ENCODE measurements at regions of chr19 and their contacts with region 1.

Region 1: DNA sequence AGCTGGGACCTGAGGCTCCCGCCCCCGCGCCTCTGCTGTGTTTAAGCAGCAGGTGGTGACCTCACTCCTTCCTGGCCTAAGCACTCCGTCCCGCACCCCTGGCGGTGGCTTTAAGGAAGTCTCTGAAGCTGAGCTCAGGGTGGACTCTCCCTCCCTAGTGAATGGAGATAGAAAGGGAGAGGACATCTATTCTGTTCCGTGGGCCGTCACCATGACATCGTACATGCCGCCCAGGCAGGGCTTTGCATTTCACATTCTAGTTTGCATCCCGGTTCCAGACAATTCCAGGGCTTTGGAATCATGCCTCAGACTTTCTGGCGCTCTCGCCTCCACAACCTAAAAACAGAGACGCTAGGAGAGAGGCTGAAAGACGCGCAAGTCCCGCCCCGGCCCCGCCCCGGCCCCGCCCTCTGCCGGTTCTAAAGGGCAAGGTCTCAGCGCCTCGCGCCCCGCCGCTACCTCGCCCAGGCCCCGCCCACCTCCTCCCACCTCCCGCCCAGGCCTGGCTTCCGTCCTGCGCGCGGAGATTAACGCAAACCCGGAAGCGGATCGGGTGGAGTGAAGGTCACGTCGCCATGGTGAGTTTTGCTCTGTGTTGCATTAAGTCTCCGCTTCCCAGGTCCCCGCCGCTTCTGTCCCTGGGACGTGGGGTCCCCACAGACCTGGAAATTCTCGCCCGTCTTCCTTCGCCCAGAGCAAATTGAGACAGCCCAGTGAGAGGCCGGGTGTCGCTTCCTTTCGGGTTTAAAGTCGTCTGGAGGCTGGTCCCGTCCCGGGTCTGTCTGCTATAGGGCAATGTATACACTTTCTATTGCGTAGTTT is at the start of gene ZNF808:
- DNase-seq: peak; percentile 94
- ATAC-seq: peak; percentile 92
- H3K4me3 ChIP-seq: peak within 1 kb of the TSS; percentile 60 to 97 (median 89)
- H3K4me3 Mint-ChIP-seq: peak within 1 kb of the TSS; percentile 96
- H3K27ac ChIP-seq: peak within 1 kb of the TSS; percentile 88 to 94
- H3K27ac Mint-ChIP-seq: peak within 1 kb of the TSS; percentile 96
- H3K4me1 ChIP-seq: peaks cover 9 to 19% of the 10 kb centered on the region in 2 donors
- H3K4me1 Mint-ChIP-seq: peaks cover 26% of the 10 kb centered on the region
- H3K27me3 ChIP-seq: no peaks in the 10 kb centered on the region
- H3K27me3 Mint-ChIP-seq: no peaks in the 10 kb centered on the region
- CTCF ChIP-seq: peak; percentile 64
- total RNA-seq, gene ZNF808: 54.8 and 56.0 TPM in 2 replicates

Region 2: DNA sequence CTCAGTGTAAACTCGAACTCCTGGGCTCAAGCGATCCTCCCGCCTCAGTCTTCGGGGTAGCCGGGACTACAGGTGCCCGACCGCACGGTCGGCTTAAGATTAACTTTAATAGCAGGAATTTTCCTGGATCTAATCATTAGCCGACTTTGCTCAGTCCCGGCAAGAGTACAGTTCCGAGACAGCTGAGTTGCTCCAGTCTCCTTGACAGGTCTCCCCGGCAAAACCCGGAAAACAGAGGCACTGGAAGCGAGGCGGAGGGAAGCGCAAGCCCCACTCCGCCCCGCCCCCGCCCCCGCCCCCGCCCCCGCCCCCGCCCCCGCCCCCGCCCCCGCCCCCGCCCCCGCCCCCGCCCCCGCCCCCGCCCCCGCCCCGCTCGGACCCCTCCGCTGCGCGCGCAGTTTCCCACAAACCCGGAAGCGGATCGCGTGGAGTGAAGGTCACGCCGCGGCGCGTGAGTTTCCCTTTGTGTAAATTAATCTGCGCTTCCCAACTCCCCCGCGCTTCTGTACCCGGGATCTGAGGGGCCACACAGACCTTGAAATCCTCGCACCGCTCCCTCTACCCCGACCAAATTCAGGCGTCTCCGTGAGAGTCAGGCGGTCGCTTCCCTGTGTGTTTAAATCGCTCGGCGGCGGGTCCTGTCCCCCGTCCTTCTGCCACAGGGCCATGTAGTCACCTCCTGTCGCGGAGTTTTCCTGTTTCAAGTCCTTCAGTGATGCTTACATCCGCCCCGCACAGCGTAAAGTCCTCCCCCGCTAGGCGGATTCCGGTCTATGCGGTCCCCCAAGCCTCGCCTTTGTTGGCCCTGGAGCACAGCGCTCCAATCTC is 230.4 kb before region 1 on chr19 and contains the start of gene ZNF480:
- CTCF ChIA-PET with region 1: no interaction called
- POLR2A ChIA-PET with region 1: no interaction called
- intact Hi-C with region 1: loop called (anchors 2 kb)
- DNase-seq: peak; percentile 91
- ATAC-seq: peak; percentile 77
- H3K4me3 ChIP-seq: peak within 1 kb of the TSS; percentile 93 to 98 (median 98)
- H3K4me3 Mint-ChIP-seq: peak within 1 kb of the TSS; percentile 96
- H3K27ac ChIP-seq: peak within 1 kb of the TSS; percentile 94 to 96
- H3K27ac Mint-ChIP-seq: peak within 1 kb of the TSS; percentile 98
- H3K4me1 ChIP-seq: peaks cover 11 to 16% of the 10 kb centered on the region in 2 donors
- H3K4me1 Mint-ChIP-seq: peaks cover 21% of the 10 kb centered on the region
- H3K27me3 ChIP-seq: no peaks in the 10 kb centered on the region
- H3K27me3 Mint-ChIP-seq: no peaks in the 10 kb centered on the region
- CTCF ChIP-seq: no peak
- total RNA-seq, gene ZNF480: 21.8 and 24.8 TPM in 2 replicates

Region 3: GRCh38 chr19:52397310-52398080 is 129.8 kb before region 1 on chr19 and contains the start of gene ZNF528:
- CTCF ChIA-PET with region 1: no interaction called
- POLR2A ChIA-PET with region 1: no interaction called
- intact Hi-C with region 1: loop called (anchors 1 kb)
- DNase-seq: peak; percentile 92
- ATAC-seq: peak; percentile 98
- H3K4me3 ChIP-seq: peak within 1 kb of the TSS; percentile 61 to 89 (median 72)
- H3K4me3 Mint-ChIP-seq: peak within 1 kb of the TSS; percentile 90
- H3K27ac ChIP-seq: peak within 1 kb of the TSS; percentile 60 to 77
- H3K27ac Mint-ChIP-seq: peak within 1 kb of the TSS; percentile 94
- H3K4me1 ChIP-seq: peaks cover 15 to 17% of the 10 kb centered on the region in 2 donors
- H3K4me1 Mint-ChIP-seq: peaks cover 20% of the 10 kb centered on the region
- H3K27me3 ChIP-seq: no peaks in the 10 kb centered on the region
- H3K27me3 Mint-ChIP-seq: no peaks in the 10 kb centered on the region
- CTCF ChIP-seq: no peak
- total RNA-seq, gene ZNF528: 69.2 and 71.8 TPM in 2 replicates

Region 4: GRCh38 chr19:52570000-52570861 is 42.9 kb after region 1 on chr19 and contains the start of gene ZNF701:
- CTCF ChIA-PET with region 1: interaction called, 3 read pairs
- POLR2A ChIA-PET with region 1: no interaction called
- intact Hi-C with region 1: loop called (anchors 1 kb)
- DNase-seq: peak; percentile 96
- ATAC-seq: peak; percentile 99
- H3K4me3 ChIP-seq: peak within 1 kb of the TSS; percentile 84 to 98 (median 98)
- H3K4me3 Mint-ChIP-seq: peak within 1 kb of the TSS; percentile 87
- H3K27ac ChIP-seq: peak within 1 kb of the TSS; percentile 77 to 87
- H3K27ac Mint-ChIP-seq: peak within 1 kb of the TSS; percentile 82
- H3K4me1 ChIP-seq: peaks cover 11 to 14% of the 10 kb centered on the region in 2 donors
- H3K4me1 Mint-ChIP-seq: peaks cover 33% of the 10 kb centered on the region
- H3K27me3 ChIP-seq: no peaks in the 10 kb centered on the region
- H3K27me3 Mint-ChIP-seq: no peaks in the 10 kb centered on the region
- CTCF ChIP-seq: peak; percentile 45
- total RNA-seq, gene ZNF701: 48.8 and 49.2 TPM in 2 replicates

Region 5: DNA sequence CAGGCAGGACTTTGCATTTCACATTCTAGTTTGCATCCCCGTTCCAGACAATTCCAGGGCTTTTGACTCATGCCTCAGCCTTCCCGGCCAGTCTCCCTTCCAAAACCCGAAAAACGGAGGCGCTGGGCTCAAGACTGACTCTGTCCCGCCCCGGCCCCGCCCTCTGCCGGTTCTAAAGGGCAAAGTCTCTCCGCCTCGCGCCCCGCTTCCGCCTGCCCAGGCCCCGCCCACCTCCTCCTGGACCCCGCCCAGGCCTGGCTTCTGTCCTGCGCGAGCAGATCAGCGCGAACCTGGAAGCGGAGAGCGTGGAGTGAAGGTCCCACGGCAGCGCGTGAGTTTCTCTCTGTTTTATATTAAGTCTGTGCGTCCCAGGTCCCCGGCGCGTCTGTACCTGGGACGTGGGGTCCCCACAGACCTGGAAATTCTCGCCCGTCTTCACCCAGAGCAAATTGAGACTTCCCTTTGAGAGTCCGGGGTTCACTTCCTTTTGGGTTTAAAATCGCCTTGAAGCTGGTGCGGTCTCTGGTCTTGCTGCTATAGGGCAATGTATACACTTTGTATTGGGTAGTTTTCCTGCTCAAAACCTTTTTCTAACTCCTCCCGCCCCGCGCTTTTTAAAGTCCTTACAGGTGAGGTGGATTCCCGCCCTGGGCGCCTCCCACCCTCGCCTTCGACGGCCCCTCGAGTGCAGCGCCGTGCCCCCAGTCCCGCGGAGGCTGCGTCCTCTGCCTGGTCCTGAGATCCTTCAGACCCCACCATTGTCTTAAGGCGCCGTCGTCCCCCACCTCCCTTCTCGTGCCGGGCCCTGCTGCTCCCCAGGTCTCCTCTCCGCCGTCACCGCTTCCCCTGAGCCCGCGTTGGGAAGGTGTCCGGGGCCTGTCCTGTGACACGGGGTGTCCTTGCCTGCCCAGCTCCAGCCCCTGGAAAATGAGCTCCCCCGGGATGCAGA is 74.0 kb after region 1 on chr19:
- CTCF ChIA-PET with region 1: interaction called, 3 read pairs
- POLR2A ChIA-PET with region 1: interaction called, 4 read pairs
- intact Hi-C with region 1: loop called (anchors 2 kb)
- DNase-seq: peak; percentile 92
- ATAC-seq: peak; percentile 99
- H3K4me3 ChIP-seq: peak overlapping the region; percentile 59 to 89 (median 82)
- H3K4me3 Mint-ChIP-seq: peak overlapping the region; percentile 90
- H3K27ac ChIP-seq: peak overlapping the region; percentile 43 to 62
- H3K27ac Mint-ChIP-seq: peak overlapping the region; percentile 87
- H3K4me1 ChIP-seq: peaks cover 11 to 16% of the 10 kb centered on the region in 2 donors
- H3K4me1 Mint-ChIP-seq: peaks cover 25% of the 10 kb centered on the region
- H3K27me3 ChIP-seq: no peaks in the 10 kb centered on the region
- H3K27me3 Mint-ChIP-seq: no peaks in the 10 kb centered on the region
- CTCF ChIP-seq: peak; percentile 61

Region 6: DNA sequence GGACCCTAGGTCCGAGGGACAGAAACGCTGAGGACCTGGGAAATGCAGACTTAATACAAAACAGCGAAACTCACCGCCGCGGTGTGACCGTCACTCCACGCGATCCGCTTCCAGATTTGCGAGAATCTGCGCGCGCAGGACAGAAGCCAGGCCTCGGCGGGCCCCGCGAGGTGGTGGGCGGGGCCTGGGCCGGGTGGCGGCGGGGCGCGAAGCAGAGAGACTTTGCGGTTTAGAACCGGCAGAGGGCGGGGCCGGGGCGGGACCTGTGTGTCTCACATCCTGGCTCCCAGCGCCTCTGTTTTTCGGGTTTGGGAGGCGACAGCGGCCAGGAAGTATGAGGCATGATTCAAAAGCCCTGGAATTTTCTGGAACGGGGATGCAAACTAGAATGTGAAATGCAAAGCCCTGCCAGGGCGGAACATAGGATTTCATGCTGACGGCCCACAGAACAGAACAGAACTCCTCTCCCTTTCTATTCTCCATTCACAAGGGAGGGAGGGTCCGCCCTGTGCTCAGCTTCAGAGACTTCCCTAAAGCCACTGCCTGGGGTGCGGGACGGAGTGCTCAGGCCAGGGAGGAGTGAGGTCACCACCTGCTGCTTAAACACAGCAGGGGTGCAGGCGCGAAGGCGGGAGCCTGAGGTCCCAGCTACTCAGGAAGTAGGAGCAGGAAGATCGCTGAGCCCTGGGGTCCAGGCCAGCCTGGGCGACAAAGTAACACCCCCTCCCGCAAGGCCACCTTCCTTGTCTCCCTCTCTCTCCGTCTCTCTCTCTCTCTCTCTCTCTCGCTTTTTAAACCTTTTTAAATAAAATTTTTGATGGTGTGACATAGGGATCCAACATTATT is 163.2 kb after region 1 on chr19:
- CTCF ChIA-PET with region 1: no interaction called
- POLR2A ChIA-PET with region 1: interaction called, 6 read pairs
- intact Hi-C with region 1: loop called (anchors 1 kb)
- DNase-seq: peak; percentile 92
- ATAC-seq: peak; percentile 97
- H3K4me3 ChIP-seq: peak overlapping the region; percentile 76 to 91 (median 80)
- H3K4me3 Mint-ChIP-seq: peak overlapping the region; percentile 97
- H3K27ac ChIP-seq: peak overlapping the region; percentile 55 to 72
- H3K27ac Mint-ChIP-seq: peak overlapping the region; percentile 87
- H3K4me1 ChIP-seq: peaks cover 12 to 15% of the 10 kb centered on the region in 2 donors
- H3K4me1 Mint-ChIP-seq: peaks cover 26% of the 10 kb centered on the region
- H3K27me3 ChIP-seq: no peaks in the 10 kb centered on the region
- H3K27me3 Mint-ChIP-seq: no peaks in the 10 kb centered on the region
- CTCF ChIP-seq: no peak

Region 7: GRCh38 chr19:52897144-52897935 is 370.0 kb after region 1 on chr19 and contains the start of gene ZNF320:
- CTCF ChIA-PET with region 1: no interaction called
- POLR2A ChIA-PET with region 1: no interaction called
- intact Hi-C with region 1: loop called (anchors 1 kb)
- DNase-seq: peak; percentile 95
- ATAC-seq: peak; percentile 100
- H3K4me3 ChIP-seq: peak within 1 kb of the TSS; percentile 85 to 98 (median 98)
- H3K4me3 Mint-ChIP-seq: peak within 1 kb of the TSS; percentile 96
- H3K27ac ChIP-seq: peak within 1 kb of the TSS; percentile 66 to 83
- H3K27ac Mint-ChIP-seq: peak within 1 kb of the TSS; percentile 94
- H3K4me1 ChIP-seq: peaks cover 5 to 17% of the 10 kb centered on the region in 2 donors
- H3K4me1 Mint-ChIP-seq: peaks cover 20% of the 10 kb centered on the region
- H3K27me3 ChIP-seq: no peaks in the 10 kb centered on the region
- H3K27me3 Mint-ChIP-seq: no peaks in the 10 kb centered on the region
- CTCF ChIP-seq: no peak
- total RNA-seq, gene ZNF320: 33.1 and 36.0 TPM in 2 replicates